Activated naive CD4-positive, alpha-beta T cell treated with anti-CD3 and anti-CD28 coated beads for 36 hours (primary cell): ENCODE measurements at regions of chr7 and their contacts with region 1.

Region 1: GRCh38 chr7:151631968-151632749 is 112.5 kb upstream of the RHEB start:
- DNase-seq: peak; percentile 87
- H3K4me3 Mint-ChIP-seq: peak overlapping the region; percentile 95
- H3K27ac Mint-ChIP-seq: peak overlapping the region; percentile 99
- H3K4me1 Mint-ChIP-seq: peaks cover 23% of the 10 kb centered on the region
- H3K27me3 Mint-ChIP-seq: no peaks in the 10 kb centered on the region

Region 2: GRCh38 chr7:151368136-151368571 is 264.0 kb before region 1 on chr7:
- CTCF ChIA-PET with region 1: no interaction called
- intact Hi-C with region 1: loop called (anchors 2 kb)
- DNase-seq: peak; percentile 86
- H3K4me3 Mint-ChIP-seq: no peak overlapping the region
- H3K27ac Mint-ChIP-seq: no peak overlapping the region
- H3K4me1 Mint-ChIP-seq: peaks cover 7% of the 10 kb centered on the region
- H3K27me3 Mint-ChIP-seq: no peaks in the 10 kb centered on the region

Region 3: GRCh38 chr7:151472644-151473380 is 159.3 kb before region 1 on chr7:
- CTCF ChIA-PET with region 1: interaction called, 3 read pairs
- intact Hi-C with region 1: loop called (anchors 5 kb)
- DNase-seq: no peak
- H3K4me3 Mint-ChIP-seq: no peak overlapping the region
- H3K27ac Mint-ChIP-seq: no peak overlapping the region
- H3K4me1 Mint-ChIP-seq: peaks cover 31% of the 10 kb centered on the region
- H3K27me3 Mint-ChIP-seq: no peaks in the 10 kb centered on the region

Region 4: DNA sequence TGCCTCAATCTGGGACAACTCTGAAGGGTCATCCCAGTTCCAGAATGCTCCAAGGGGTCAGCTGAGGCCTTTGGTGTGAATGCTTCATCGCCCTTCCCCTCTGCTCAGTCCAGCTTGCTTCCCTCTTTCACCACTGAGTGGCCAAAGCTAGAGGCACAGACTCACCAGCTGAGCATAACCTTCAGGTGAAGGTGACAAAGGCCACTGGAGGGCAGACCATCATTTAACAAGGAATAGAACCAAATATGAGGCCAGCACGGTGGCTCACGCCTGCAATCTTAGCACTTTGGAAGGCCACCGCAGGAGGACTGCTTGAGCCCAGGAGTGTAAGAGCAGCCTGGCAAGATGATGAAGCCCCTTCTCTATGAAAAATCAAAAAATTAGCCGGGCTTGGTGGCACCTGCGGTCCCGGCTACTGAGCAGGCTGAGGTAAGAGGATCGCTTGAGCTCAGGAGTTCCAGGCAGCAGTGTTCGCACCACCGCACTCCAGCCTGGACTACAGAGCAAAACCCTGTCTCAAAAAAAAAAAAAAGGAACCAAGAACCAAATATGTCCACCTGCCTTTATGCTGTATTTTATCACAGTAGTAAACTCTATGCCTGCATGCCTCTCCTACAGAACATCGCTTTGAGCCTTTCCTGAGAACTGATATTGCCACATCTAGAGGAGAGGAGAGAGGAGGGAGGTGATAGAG is 231.4 kb after region 1 on chr7:
- CTCF ChIA-PET with region 1: no interaction called
- intact Hi-C with region 1: no loop called
- DNase-seq: peak; percentile 24
- H3K4me3 Mint-ChIP-seq: no peak overlapping the region
- H3K27ac Mint-ChIP-seq: no peak overlapping the region
- H3K4me1 Mint-ChIP-seq: peaks cover 6% of the 10 kb centered on the region
- H3K27me3 Mint-ChIP-seq: no peaks in the 10 kb centered on the region

Region 5: DNA sequence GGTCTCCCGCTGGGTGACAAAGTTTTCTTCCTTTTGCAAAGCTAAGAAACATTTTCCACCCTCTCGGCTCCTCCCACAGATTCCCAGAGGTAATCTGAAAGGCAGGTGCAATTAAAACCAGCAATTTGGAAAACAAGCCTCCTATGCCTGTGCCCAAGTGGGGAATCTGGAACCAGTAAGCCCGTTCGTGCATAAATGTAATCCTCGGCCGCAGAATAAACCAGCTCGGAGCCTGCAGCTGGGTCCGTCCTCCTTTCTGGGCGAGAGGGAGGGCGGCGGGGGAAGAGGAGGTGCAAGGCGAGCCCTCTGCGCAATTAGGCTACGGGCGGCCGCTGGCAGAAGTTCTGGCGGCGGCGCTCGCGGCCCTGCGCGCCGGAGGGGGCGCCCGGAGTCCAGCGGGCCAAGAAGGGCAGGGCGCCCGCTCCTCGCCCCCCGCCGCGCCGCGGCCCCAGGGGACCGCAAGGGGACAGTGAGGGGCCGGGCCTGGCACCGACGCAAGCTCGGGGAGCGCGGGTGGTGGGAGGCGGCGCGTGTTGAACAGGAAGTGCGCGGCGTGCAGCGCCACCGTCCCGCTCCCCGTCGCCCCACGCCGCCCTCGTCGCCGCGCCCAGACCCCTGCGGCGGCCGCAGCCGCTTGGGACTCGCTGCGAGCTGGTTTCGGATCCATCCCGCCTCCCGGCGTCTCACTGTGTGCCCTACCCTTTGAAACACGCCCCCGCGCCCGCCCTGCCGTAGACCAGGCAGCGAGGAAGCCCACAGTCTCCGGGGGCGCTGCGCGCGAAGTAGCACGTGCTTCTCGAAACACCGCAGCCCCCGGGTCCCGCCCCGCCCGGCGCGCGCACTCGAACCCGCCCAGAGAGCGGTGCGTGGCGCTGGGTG is 245.0 kb after region 1 on chr7 and contains the start of gene PRKAG2:
- CTCF ChIA-PET with region 1: no interaction called
- intact Hi-C with region 1: loop called (anchors 2 kb)
- DNase-seq: peak; percentile 63
- H3K4me3 Mint-ChIP-seq: peak within 1 kb of the TSS; percentile 96
- H3K27ac Mint-ChIP-seq: peak within 1 kb of the TSS; percentile 81
- H3K4me1 Mint-ChIP-seq: peaks cover 10% of the 10 kb centered on the region
- H3K27me3 Mint-ChIP-seq: no peaks in the 10 kb centered on the region
- total RNA-seq, gene PRKAG2: 16.9 to 18.7 TPM